MCF 10A (cell line): ENCODE measurements at regions of chr1 and their contacts with region 1.

Region 1: DNA sequence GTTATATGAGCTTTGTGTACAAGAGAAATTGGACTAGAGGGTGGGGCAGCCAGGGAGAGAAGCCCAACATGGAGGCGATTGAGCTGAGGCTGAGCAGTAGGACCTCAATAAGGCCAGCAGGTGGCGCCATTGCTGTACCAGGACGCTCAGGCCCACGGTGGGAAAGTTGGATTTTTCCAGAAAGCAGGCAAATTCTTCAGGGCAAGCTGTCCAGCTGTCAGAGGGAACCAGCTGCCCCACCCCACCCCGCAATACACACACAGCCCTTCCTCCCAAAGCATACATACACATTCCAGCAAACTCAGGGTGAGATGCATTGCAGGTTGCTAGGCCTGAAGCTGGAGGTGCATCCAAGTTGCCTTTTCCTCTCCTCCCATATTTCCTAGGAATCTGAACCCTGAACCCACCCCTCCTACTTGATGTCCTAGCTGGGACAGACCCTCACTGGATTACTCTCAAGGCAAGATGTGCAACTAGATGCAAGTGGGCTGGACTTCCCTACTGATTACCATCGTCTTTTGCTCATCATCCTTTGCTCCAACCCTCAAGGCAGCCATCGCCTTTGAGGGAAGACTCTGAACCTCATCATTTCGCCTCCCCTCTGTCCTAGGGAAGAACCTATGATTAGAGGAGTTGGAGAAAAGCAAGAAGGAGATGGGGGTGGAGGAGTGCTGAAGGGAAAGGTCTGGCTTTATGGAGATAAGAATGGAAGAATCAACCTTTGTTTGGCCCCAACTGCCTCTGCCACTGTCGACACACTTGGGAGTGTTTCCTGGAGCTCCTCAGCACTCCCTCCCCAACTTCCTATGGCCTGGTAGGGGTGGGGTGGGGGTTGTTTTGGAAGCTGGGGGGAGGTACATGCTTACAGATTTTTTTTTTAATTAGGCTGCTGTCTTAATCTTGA is 25.5 kb downstream of the CD34 start:
- DNase-seq: peak; percentile 94
- H3K4me3 Mint-ChIP-seq: no peak overlapping the region
- H3K27ac Mint-ChIP-seq: no peak overlapping the region
- H3K4me1 Mint-ChIP-seq: peaks cover 40% of the 10 kb centered on the region
- H3K27me3 Mint-ChIP-seq: peaks cover 16% of the 10 kb centered on the region
- CTCF ChIP-seq: peak; percentile 100

Region 2: GRCh38 chr1:207818971-207819451 is 66.4 kb before region 1 on chr1:
- CTCF ChIA-PET with region 1: interaction called, 181 read pairs
- POLR2A ChIA-PET with region 1: interaction called, 8 read pairs
- intact Hi-C with region 1: no loop called
- DNase-seq: peak; percentile 78
- H3K4me3 Mint-ChIP-seq: peak overlapping the region; percentile 53
- H3K27ac Mint-ChIP-seq: peak overlapping the region; percentile 81
- H3K4me1 Mint-ChIP-seq: peaks cover 81% of the 10 kb centered on the region
- H3K27me3 Mint-ChIP-seq: no peaks in the 10 kb centered on the region
- CTCF ChIP-seq: no peak

Region 3: DNA sequence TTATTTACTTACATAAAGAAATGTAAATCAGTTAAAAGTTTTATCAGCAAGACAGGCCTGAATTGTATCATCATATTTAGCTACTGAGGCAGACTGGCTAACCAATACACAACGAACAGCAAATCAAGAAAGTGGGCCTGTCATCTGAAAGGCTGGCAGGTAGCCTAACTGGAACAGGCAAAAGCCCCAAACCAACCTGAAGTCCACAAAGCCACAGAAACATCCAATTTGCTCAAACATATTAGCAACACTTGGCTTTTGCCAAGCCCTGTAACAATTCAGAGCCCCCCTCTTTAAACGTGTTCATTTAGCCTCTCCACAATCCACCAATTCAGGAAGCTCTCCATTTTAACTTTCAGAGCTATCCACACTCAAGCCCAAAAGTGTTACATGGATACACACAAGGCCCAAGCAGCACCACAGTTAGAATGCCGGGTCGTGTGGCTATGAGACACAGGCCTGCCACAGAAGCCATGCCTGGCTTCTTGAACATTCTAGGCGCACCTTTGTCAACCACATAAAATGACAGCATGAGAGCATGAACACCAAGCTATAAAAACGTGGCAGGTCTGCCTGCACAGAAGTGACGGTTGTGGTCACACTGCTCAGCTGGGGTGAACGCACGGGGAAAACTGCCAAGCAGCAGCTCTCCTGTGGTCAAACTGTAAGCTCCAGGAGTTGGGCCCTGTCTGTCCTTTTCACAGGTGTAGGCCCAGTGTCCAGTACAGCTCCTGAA is 23.8 kb before region 1 on chr1:
- CTCF ChIA-PET with region 1: interaction called, 11 read pairs
- POLR2A ChIA-PET with region 1: interaction called, 3 read pairs
- intact Hi-C with region 1: no loop called
- DNase-seq: no peak
- H3K4me3 Mint-ChIP-seq: no peak overlapping the region
- H3K27ac Mint-ChIP-seq: peak overlapping the region; percentile 2
- H3K4me1 Mint-ChIP-seq: peaks cover 34% of the 10 kb centered on the region
- H3K27me3 Mint-ChIP-seq: no peaks in the 10 kb centered on the region
- CTCF ChIP-seq: no peak

Region 4: GRCh38 chr1:207919523-207920170 is 34.3 kb after region 1 on chr1:
- CTCF ChIA-PET with region 1: interaction called, 21 read pairs
- POLR2A ChIA-PET with region 1: no interaction called
- intact Hi-C with region 1: no loop called
- DNase-seq: no peak
- H3K4me3 Mint-ChIP-seq: no peak overlapping the region
- H3K27ac Mint-ChIP-seq: no peak overlapping the region
- H3K4me1 Mint-ChIP-seq: no peaks in the 10 kb centered on the region
- H3K27me3 Mint-ChIP-seq: peaks cover 13% of the 10 kb centered on the region
- CTCF ChIP-seq: no peak

Region 5: GRCh38 chr1:207952617-207953542 is 67.5 kb after region 1 on chr1:
- CTCF ChIA-PET with region 1: interaction called, 405 read pairs
- POLR2A ChIA-PET with region 1: interaction called, 4 read pairs
- intact Hi-C with region 1: no loop called
- DNase-seq: no peak
- H3K4me3 Mint-ChIP-seq: no peak overlapping the region
- H3K27ac Mint-ChIP-seq: no peak overlapping the region
- H3K4me1 Mint-ChIP-seq: no peaks in the 10 kb centered on the region
- H3K27me3 Mint-ChIP-seq: peaks cover 10% of the 10 kb centered on the region
- CTCF ChIP-seq: no peak

Region 6: DNA sequence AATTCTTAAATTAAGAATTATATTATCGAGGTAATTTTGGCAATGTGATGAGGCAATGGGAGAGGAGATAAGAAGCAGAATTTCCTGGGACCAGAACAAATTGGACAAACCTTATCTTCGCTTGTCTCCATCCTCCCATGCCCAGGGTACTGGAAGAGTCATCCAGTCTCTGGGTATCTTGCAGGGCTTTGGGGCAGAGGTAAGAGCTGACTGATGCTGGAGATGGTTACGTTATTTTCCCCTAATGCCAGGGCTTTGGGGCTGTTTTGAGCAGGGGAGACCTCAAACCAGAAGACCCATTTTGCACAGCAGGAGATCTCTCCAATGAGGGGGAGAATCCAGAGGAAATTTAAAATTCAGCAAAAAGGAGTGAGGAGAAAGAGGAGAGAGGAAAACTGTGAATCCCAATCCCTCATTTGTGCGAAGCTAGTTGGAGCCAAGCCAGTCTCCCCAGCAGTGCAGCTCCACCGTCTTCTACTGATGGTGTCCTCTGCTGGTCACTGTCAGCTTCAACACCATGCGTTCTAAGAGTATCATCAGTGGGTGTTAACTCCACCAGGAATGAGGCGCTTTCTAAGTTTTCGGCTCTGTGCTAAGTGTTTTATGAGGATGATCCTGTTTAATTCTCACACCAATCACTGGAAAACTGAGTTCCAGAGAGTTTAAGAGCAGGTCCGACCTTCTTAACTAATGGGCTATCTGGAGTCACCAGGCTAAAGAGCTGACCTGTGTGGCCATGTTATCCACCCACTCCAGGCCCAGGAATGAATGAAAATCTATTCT is 112.3 kb after region 1 on chr1:
- CTCF ChIA-PET with region 1: interaction called, 74 read pairs
- POLR2A ChIA-PET with region 1: interaction called, 6 read pairs
- intact Hi-C with region 1: loop called (anchors 1 kb)
- DNase-seq: peak; percentile 92
- H3K4me3 Mint-ChIP-seq: no peak overlapping the region
- H3K27ac Mint-ChIP-seq: no peak overlapping the region
- H3K4me1 Mint-ChIP-seq: no peaks in the 10 kb centered on the region
- H3K27me3 Mint-ChIP-seq: peaks cover 38% of the 10 kb centered on the region
- CTCF ChIP-seq: peak; percentile 95

Region 7: DNA sequence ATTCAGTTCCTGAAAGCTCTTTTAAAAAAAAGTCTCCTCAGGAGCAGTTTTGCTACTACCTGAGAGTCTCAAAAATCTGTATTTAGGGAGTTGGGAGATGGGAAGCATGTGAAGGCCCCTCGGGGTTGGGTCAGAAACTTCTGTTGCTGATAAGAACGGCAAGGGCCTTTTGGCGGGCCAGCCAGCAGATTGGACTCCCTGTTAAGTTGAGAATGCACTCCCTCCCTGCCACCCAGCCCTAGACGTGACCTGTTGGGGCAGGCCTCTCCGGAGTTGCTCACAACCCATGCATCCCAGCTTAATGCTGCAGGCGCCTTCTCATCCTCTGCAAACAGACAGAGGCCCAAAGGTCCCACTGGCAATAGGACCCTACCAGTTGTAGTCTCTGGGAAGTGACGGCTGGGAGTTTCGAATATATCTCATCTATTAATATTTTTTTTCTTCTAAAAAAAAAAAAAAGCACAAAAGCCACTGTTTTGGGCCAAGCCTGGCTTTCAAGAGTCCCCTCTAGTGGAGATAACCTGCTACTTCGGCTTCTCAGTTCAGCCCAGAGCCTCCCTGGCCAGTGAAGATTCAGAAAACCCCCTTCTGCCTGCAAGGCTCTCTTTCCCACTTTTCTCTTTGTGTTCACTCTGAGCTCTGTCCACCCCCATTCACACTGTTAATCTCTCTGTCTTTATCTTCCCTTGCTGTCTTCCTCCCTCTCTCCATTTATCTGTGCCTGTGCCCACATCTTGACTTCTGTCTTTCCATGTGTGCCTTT is 353.5 kb after region 1 on chr1:
- CTCF ChIA-PET with region 1: interaction called, 20 read pairs
- POLR2A ChIA-PET with region 1: interaction called, 3 read pairs
- intact Hi-C with region 1: loop called (anchors 1 kb)
- DNase-seq: peak; percentile 93
- H3K4me3 Mint-ChIP-seq: no peak overlapping the region
- H3K27ac Mint-ChIP-seq: peak overlapping the region; percentile 81
- H3K4me1 Mint-ChIP-seq: peaks cover 60% of the 10 kb centered on the region
- H3K27me3 Mint-ChIP-seq: no peaks in the 10 kb centered on the region
- CTCF ChIP-seq: peak; percentile 98

Region 8: DNA sequence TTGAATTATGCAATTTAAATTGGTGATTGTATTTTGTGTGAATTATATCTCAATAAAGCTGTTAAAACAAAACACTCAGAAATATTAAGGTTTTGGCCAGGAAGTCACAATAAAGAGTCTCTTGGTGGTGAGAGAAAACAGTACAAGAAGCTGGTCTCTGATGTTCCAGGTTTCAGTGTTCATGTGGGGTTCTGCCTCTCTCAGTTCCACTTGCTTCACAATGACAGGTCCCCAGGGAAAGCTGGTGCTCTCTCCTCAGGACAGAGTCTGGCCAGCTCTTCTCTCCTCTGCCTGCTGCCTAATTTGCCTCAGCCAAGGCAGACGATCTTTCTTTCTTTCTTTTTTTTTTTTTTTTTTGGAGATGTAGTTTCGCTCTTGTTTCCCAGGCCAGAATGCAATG is 701.7 kb after region 1 on chr1:
- CTCF ChIA-PET with region 1: no interaction called
- POLR2A ChIA-PET with region 1: no interaction called
- intact Hi-C with region 1: no loop called
- DNase-seq: no peak
- H3K4me3 Mint-ChIP-seq: no peak overlapping the region
- H3K27ac Mint-ChIP-seq: no peak overlapping the region
- H3K4me1 Mint-ChIP-seq: no peaks in the 10 kb centered on the region
- H3K27me3 Mint-ChIP-seq: no peaks in the 10 kb centered on the region
- CTCF ChIP-seq: no peak